Naive thymus-derived CD4-positive, alpha-beta T cell (primary cell): ENCODE measurements at regions of chr11 and their contacts with region 1.

Region 1: DNA sequence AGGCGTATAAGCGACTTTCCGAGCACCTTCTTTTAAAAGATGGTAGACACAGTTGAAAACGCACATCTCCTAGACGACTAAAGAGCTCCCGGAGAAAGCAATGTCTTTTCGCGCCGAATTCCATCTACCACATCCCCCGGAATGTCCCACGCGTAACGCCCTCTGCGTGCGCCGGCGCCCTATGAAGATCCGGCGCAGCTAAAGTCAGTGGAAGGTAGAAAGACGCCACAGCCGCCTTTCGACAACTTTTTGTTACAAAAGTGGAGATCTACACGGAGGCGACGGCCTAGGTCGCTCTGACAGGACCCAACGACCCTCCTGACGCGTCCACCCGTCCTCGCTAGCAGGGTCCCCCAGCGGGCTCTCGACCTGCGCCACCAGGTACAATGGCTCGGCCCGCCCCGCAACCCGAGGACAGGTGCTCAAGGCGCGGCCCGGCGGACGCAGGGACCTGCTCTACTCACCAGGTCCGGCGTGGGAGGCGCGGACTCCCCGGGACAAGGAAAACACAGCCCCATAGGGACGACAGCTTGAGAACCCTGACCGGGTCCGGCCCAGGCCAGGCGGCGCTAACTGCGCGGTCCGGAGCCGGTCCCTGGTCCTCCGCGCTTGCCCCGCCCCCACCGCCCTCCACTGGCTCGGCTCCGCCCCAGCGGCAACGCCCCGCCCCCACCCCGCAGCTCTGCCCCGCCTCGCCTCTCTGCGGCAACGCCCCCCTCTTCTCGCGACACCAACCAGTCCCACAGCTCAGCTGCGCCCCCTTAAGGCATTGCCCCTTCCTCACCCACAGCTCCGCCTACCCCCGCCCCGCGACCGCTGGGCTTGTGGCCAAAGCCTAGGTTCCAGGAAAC is at the start of gene SVIP:
- DNase-seq: peak; percentile 82 to 92 (median 89)
- ATAC-seq: peak; percentile 98
- H3K4me3 ChIP-seq: peak within 1 kb of the TSS; percentile 88
- H3K4me3 Mint-ChIP-seq: peak within 1 kb of the TSS; percentile 85 to 96 (median 94)
- H3K27ac ChIP-seq: peak within 1 kb of the TSS; percentile 87
- H3K27ac Mint-ChIP-seq: peak within 1 kb of the TSS; percentile 87 to 97 (median 93)
- H3K4me1 ChIP-seq: peaks cover 12 to 16% of the 10 kb centered on the region in 2 donors
- H3K4me1 Mint-ChIP-seq: peaks cover 7 to 22% (median 18%) of the 10 kb centered on the region in 7 donors
- H3K27me3 ChIP-seq: no peaks in the 10 kb centered on the region
- H3K27me3 Mint-ChIP-seq: no peaks in the 10 kb centered on the region
- total RNA-seq, gene SVIP: 33.4 to 70.6 (median 49.2) TPM

Region 2: DNA sequence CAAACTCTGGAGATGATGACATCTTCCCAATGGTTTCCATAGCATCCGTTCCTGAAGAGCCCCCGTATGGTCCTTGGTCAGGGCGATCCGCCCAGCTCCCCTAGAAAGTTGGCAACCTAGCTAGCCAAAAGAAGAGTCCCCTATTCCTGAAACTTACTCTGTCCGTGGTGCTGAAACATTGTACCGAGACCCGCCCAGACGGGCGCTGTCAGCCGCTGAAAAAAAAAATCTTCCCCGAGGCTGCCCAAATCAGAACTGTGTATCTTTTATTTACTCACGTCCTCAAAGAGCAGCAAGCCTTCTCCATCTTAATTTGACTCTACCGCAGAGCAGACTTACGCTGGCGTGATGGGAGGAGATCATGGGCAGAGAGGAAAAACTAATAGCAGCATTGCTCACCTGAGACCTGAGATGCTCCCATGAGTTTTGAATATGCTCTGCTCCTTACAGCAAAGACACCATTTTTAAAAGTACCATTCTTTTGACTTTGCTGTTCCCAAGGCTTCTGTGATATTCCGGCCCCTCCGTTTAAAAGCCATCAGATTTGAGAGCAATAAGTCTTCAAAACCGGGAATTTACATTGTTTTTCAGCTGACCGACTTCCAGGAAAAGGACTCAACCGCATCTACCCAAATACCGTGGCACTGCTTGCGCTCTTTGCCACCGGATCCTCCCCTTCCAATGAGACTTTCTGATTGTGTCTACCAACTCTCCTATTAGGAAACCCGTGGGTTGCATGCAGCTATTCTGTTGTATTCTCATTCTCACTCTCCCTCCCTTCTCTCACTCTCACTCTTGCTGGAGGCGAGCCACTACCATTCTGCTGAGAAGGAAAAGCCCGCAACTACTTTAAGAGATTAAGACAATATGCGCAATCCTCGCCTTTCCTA is 491.6 kb before region 1 on chr11 and contains the start of gene SLC17A6:
- CTCF ChIA-PET with region 1: no interaction called
- POLR2A ChIA-PET with region 1: no interaction called
- intact Hi-C with region 1: loop called in 1 of 2 experiments (anchors 2 kb)
- DNase-seq: peak in 2 of 9 donors; percentile 12 to 31
- ATAC-seq: no peak
- H3K4me3 ChIP-seq: no peak within 1 kb of the TSS
- H3K4me3 Mint-ChIP-seq: no peak within 1 kb of the TSS
- H3K27ac ChIP-seq: no peak within 1 kb of the TSS
- H3K27ac Mint-ChIP-seq: no peak within 1 kb of the TSS
- H3K4me1 ChIP-seq: peaks cover 0 to 3% of the 10 kb centered on the region in 2 donors
- H3K4me1 Mint-ChIP-seq: peaks cover 7 to 21% (median 12%) of the 10 kb centered on the region in 7 donors
- H3K27me3 ChIP-seq: peaks cover 4 to 15% of the 10 kb centered on the region in 2 donors
- H3K27me3 Mint-ChIP-seq: peaks cover 55 to 73% (median 61%) of the 10 kb centered on the region in 5 donors
- total RNA-seq, gene SLC17A6: not detected

Region 3: GRCh38 chr11:22666688-22667439 is 162.6 kb before region 1 on chr11:
- CTCF ChIA-PET with region 1: no interaction called
- POLR2A ChIA-PET with region 1: no interaction called
- intact Hi-C with region 1: loop called in 1 of 2 experiments (anchors 1 kb)
- DNase-seq: peak in 4 of 9 donors; percentile 11 to 32 (median 20)
- ATAC-seq: peak; percentile 31
- H3K4me3 ChIP-seq: no peak overlapping the region
- H3K4me3 Mint-ChIP-seq: peak overlapping the region; percentile 49 to 94 (median 73)
- H3K27ac ChIP-seq: no peak overlapping the region
- H3K27ac Mint-ChIP-seq: peak overlapping the region in 1 of 9 donors; percentile 54
- H3K4me1 ChIP-seq: peaks cover 0 to 5% of the 10 kb centered on the region in 2 donors
- H3K4me1 Mint-ChIP-seq: peaks cover 9 to 24% (median 13%) of the 10 kb centered on the region in 7 donors
- H3K27me3 ChIP-seq: peaks cover 5 to 7% of the 10 kb centered on the region in 2 donors
- H3K27me3 Mint-ChIP-seq: peaks cover 60 to 67% (median 66%) of the 10 kb centered on the region in 5 donors

Region 4: GRCh38 chr11:22690871-22691270 is 138.6 kb before region 1 on chr11:
- CTCF ChIA-PET with region 1: interaction called, 3 read pairs
- POLR2A ChIA-PET with region 1: interaction called, 9 read pairs
- intact Hi-C with region 1: loop called in 1 of 2 experiments (anchors 5 kb)
- DNase-seq: peak in 7 of 9 donors; percentile 43 to 74 (median 65)
- ATAC-seq: peak; percentile 91
- H3K4me3 ChIP-seq: peak overlapping the region; percentile 45
- H3K4me3 Mint-ChIP-seq: peak overlapping the region; percentile 48 to 94 (median 84)
- H3K27ac ChIP-seq: peak overlapping the region; percentile 66
- H3K27ac Mint-ChIP-seq: peak overlapping the region; percentile 10 to 97 (median 94)
- H3K4me1 ChIP-seq: peaks cover 0 to 9% of the 10 kb centered on the region in 2 donors
- H3K4me1 Mint-ChIP-seq: peaks cover 5 to 41% (median 29%) of the 10 kb centered on the region in 7 donors
- H3K27me3 ChIP-seq: no peaks in the 10 kb centered on the region
- H3K27me3 Mint-ChIP-seq: no peaks in the 10 kb centered on the region

Region 5: DNA sequence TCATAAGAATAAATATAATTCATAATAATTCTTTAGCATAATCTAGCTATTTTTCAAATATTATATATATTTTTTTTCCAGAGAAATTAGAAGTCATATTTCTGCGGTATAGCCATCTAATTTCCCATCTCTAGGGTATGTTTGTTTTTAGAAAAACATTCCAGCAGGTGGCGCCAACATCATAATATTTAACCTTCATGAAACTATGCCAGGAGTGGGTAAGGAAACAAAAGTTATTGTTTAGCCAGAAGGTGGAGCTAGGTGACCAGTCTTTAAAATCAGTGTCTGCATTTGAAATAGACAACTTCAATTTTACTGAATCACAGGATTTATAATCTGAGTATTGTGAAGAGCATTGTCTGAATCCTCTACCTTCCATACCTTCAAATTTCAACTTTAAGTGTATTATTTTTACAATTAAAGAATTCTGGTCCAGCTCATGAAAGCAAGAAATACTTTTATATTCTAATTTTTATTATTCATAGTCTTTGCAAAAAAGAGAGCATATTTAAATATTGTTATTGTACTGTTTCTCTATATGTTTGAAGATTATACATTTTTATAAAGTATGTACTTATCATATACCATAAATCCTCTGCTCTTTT is 46.5 kb after region 1 on chr11:
- CTCF ChIA-PET with region 1: no interaction called
- POLR2A ChIA-PET with region 1: no interaction called
- intact Hi-C with region 1: loop called in 1 of 2 experiments (anchors 2 kb)
- DNase-seq: peak in 8 of 9 donors; percentile 23 to 67 (median 55)
- ATAC-seq: peak; percentile 90
- H3K4me3 ChIP-seq: no peak overlapping the region
- H3K4me3 Mint-ChIP-seq: no peak overlapping the region
- H3K27ac ChIP-seq: no peak overlapping the region
- H3K27ac Mint-ChIP-seq: no peak overlapping the region
- H3K4me1 ChIP-seq: no peaks in the 10 kb centered on the region
- H3K4me1 Mint-ChIP-seq: no peaks in the 10 kb centered on the region
- H3K27me3 ChIP-seq: no peaks in the 10 kb centered on the region
- H3K27me3 Mint-ChIP-seq: no peaks in the 10 kb centered on the region